OCI-LY7 (cell line): ENCODE measurements at regions of chr4 and their contacts with region 1.

Region 1: DNA sequence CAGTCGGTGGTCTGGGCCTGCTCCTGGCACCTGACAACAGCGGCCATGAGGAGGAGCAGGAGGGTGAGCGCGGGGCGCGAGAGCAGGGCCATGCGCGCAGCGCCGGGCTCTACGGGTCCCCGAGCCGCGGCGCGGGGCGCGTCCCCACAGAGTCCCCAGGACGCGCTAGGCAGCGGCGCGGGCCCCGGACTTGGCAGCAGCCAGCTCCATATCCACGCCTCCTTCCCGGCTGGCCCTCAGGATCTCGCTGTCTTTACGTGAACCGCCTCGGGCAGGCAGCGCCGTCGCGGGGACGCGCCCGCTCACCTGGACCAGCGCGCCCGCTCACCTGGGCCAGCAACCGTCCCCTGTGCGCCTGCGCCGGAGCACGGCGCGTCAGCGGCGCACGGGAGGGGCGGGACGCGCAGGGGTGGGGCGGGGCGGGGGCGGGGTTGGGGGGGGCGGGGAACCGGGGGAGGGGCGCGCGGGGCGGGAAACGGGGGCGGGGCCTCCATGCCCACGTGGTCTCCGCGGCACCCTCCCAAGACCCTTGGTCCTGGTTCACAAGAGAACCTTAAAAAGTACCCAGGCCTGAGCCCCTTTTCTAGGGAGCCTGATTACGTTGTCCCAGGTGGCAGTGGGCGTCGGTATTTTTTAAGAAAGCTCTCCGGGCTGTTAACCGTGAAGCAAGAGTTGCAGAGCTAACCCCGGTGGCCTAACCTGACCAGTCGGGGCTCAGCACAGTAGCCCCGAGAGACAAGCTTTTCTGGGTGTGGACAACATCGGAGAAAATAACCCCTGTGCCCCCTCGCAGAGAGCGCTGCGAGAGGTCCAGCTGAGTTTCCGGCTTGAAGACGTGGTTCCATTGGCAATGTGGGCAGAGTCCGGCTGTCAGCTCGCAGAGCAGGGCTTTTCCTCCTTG is at the start of gene PLA2G12A:
- DNase-seq: peak; percentile 85
- H3K4me3 ChIP-seq: peak within 1 kb of the TSS; percentile 79
- H3K27ac ChIP-seq: no peak within 1 kb of the TSS
- H3K4me1 ChIP-seq: peaks cover 21% of the 10 kb centered on the region
- CTCF ChIP-seq: no peak
- total RNA-seq, gene PLA2G12A: 9.0 and 18.1 TPM in 2 replicates

Region 2: DNA sequence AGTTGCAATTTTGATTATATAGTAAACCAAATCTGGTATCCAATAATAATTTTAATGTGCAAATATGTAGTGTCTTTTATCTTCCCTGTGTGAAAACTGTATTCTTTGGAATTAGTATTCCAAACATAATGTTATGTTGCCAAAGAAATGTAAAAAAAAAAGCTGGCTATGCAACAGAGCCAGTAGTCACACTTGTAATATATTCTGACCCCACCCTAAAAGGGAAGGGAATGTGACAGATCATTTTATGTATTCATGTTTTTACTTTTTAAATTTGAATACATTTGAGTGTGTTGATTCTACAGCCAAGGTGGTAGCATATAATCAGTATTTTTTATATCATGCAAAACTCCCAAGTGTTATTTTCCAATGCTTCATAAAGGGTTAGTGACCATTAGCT is 197.8 kb before region 1 on chr4:
- CTCF ChIA-PET with region 1: no interaction called
- POLR2A ChIA-PET with region 1: no interaction called
- intact Hi-C with region 1: no loop called
- DNase-seq: no peak
- H3K4me3 ChIP-seq: no peak overlapping the region
- H3K27ac ChIP-seq: no peak overlapping the region
- H3K4me1 ChIP-seq: no peaks in the 10 kb centered on the region
- CTCF ChIP-seq: no peak

Region 3: DNA sequence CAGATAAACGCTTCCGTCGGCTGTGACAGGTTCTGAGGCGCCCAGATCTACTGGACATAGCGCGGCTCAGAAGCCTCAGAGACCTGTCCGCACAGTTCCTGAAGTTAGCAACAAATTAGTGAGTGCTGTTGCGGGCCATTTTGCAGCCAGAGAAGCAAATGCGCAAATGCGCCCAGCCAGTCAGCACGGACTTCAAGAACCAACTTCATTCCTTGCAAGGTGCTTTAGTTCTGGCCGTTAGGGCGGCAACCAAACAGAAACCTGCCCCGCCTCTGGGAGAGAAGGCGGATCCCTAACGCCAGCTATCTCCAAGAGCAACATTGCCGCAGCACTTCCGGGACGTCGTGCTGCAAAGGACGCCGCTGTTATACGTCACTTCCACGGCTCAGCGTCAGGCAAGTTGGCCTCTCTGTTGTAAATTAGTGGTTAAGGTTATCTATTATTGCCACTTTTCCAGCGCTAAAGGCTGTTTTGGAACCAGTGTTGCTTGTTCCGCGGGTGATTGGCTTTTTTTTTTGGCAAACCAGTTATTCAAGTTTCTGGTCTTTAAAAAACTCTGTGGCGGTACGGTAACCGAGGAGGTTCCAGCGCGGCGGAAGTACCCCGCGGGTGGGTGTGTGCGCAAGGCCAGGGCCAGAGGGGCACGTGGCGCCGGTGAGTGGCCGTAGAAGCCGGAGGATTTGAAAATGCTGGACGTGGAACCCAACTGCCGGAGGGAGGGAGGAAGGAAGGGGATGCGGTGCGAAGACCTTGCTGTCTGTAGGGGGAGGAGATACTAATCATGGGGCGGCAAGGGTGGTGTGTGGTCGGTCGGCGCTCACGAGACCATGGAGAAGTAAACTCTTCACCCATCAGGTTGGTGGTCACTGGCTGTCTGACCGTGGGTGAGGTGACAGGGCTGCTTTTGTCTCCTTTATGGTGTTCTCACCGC is 85.4 kb after region 1 on chr4 and contains the start of gene GAR1:
- CTCF ChIA-PET with region 1: no interaction called
- POLR2A ChIA-PET with region 1: interaction called, 3 read pairs
- intact Hi-C with region 1: loop called (anchors 5 kb)
- DNase-seq: peak; percentile 95
- H3K4me3 ChIP-seq: peak within 1 kb of the TSS; percentile 83
- H3K27ac ChIP-seq: peak within 1 kb of the TSS; percentile 65
- H3K4me1 ChIP-seq: peaks cover 22% of the 10 kb centered on the region
- CTCF ChIP-seq: no peak
- total RNA-seq, gene GAR1: 16.4 and 26.7 TPM in 2 replicates